ENCODE measurements at regions of chr15 and their contacts with region 1.

Region 1: DNA sequence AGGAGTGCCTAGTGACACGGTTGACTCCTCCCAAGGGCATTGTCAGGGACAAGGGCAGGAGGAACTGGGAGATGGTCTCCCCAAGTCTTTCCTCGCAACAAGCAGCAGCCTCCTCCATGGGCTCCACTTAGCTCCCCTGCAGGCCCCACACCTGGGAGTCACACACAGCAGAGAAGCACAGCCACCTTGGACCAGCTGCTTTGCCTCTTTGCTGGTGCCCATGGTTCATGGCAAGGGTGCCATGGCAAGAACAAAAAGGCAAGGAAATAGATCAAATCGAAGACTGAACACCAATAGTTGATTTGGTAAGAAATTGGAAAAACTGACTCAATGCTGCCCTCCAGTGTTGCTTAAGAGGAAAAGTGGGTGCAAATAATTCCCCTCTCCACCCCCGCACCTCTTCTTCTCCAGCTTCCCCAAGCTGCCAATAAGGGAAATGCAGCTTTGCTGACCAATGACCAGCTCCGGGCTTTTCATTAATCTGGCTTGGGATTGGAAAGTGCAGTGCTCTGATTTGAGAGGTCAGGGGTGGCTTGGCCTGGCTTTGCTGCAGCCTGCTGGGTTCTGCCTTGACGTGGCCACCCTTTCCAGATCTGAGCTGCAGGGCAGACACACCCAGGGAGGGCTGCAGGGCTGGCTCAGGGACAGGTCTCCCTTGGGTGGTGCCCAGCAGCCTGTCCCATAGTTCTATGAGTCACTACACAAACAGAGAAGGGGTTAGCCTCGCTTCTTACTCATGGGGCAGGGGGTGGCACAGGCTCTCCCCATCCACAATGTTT is 162.0 kb downstream of the KLF13 start:
- DNase-seq: peak; percentile 46 to 68
- ATAC-seq: peak; percentile 70 to 89 (median 80)
- H3K4me3 ChIP-seq: no peak overlapping the region
- H3K27ac ChIP-seq: peak overlapping the region in 4 of 10 donors; percentile 0 to 23 (median 14)
- H3K4me1 ChIP-seq: peaks cover 0 to 26% (median 18%) of the 10 kb centered on the region in 9 donors
- H3K27me3 ChIP-seq: peaks cover 0 to 13% (median 5%) of the 10 kb centered on the region in 7 donors
- CTCF ChIP-seq: peak; percentile 79 to 98 (median 87)

Region 2: DNA sequence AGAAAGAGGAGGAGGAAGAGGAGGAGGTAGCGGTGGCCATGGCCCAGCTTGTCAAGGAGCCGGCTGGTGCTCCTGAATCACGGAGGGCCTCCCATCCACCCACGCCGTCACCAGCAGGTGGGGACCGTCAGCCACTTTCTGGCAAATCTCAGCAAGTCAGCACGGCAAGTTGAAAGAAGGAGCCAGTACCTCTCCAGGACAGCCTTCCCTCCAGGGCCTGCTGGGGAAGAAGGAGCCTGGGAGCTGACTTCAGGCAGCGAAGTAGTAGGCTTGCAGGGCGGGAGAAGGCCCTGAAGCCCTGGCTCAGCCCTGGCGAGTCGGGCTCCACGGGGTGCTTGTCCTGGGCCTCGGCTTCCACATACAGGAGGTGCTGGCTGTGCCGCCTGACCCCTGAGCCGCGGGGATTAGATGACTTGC is 287.9 kb before region 1 on chr15:
- intact Hi-C with region 1: loop called in 9 of 10 experiments (anchors 1 to 5 kb)
- DNase-seq: peak; percentile 75 to 83
- ATAC-seq: peak; percentile 89 to 97 (median 92)
- H3K4me3 ChIP-seq: no peak overlapping the region
- H3K27ac ChIP-seq: no peak overlapping the region
- H3K4me1 ChIP-seq: peaks cover 0 to 8% (median 0%) of the 10 kb centered on the region in 9 donors
- H3K27me3 ChIP-seq: no peaks in the 10 kb centered on the region
- CTCF ChIP-seq: peak; percentile 27 to 93 (median 69)

Region 3: DNA sequence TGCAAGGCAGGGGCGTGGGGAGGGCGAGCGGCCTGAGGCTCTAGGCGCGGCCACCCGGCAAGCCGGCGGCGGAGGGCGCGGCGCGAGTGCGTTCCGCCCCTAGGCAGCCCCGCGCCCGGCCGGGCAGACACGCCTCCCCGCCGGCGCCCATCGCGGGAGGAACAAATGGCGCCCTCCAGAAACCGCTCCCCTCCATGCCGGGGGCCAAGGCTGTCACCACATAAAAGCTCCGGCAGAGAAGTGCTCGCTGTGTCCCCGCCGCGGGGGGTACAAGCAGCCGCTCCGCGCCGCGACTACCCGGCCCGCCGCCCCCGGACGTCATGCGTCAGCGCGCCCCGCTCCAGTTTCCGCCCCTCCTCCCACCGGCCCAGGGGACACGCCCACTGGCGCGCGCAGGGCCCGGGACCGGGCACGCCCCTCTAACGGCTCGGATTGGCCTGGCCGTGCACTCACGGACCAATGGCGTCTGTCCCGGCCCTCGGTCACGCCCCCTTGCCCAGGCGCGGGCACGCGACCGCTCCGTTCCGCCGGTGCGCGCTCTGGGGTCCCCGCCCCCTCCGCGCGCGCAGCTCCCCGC is 162.4 kb before region 1 on chr15:
- intact Hi-C with region 1: loop called in 5 of 10 experiments (anchors 2 to 10 kb)
- DNase-seq: peak; percentile 99 to 100
- ATAC-seq: peak; percentile 88 to 95 (median 92)
- H3K4me3 ChIP-seq: peak overlapping the region; percentile 71 to 96 (median 92)
- H3K27ac ChIP-seq: peak overlapping the region; percentile 99 to 100 (median 100)
- H3K4me1 ChIP-seq: peaks cover 14 to 53% (median 38%) of the 10 kb centered on the region in 9 donors
- H3K27me3 ChIP-seq: no peaks in the 10 kb centered on the region
- CTCF ChIP-seq: no peak

Region 4: DNA sequence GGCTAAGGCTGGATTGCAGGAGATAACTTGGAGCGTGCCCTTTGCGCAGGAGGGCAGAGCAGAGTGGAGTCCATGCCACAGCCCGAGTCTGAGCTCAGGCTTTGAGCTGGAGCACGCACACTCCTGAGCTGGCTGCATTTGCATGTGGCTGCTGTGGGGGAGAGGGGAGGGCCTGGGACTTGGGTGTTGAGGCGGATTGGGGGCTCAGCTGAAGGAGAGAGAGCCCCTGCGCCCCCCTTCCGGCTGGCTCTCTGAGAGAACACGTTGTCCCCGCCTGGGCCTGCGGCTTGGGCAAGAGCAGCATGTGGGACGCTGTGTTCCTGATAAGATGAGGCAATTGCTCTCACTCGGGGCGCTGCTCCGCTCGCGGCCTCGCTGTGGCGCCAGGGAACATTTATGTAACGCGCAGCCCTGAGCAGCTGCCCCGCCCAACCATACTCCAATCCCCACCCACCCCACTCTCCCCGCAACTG is 122.9 kb before region 1 on chr15:
- intact Hi-C with region 1: loop called in 1 of 10 experiments (anchors 5 kb)
- DNase-seq: peak; percentile 91 to 93
- ATAC-seq: peak; percentile 89 to 93 (median 92)
- H3K4me3 ChIP-seq: peak overlapping the region in 9 of 10 donors; percentile 21 to 39 (median 32)
- H3K27ac ChIP-seq: peak overlapping the region; percentile 78 to 97 (median 93)
- H3K4me1 ChIP-seq: peaks cover 57 to 100% (median 98%) of the 10 kb centered on the region in 9 donors
- H3K27me3 ChIP-seq: no peaks in the 10 kb centered on the region
- CTCF ChIP-seq: peak in 8 of 9 donors; percentile 30 to 62 (median 50)

Region 5: GRCh38 chr15:31442203-31443111 is 46.2 kb before region 1 on chr15:
- intact Hi-C with region 1: loop called in 7 of 10 experiments (anchors 2 to 10 kb)
- DNase-seq: peak in 1 of 2 donors; percentile 35
- ATAC-seq: peak in 5 of 8 donors; percentile 50 to 65 (median 55)
- H3K4me3 ChIP-seq: no peak overlapping the region
- H3K27ac ChIP-seq: peak overlapping the region in 5 of 10 donors; percentile 34 to 95 (median 86)
- H3K4me1 ChIP-seq: peaks cover 0 to 50% (median 13%) of the 10 kb centered on the region in 9 donors
- H3K27me3 ChIP-seq: no peaks in the 10 kb centered on the region
- CTCF ChIP-seq: peak in 4 of 9 donors; percentile 10 to 28 (median 20)

Region 6: DNA sequence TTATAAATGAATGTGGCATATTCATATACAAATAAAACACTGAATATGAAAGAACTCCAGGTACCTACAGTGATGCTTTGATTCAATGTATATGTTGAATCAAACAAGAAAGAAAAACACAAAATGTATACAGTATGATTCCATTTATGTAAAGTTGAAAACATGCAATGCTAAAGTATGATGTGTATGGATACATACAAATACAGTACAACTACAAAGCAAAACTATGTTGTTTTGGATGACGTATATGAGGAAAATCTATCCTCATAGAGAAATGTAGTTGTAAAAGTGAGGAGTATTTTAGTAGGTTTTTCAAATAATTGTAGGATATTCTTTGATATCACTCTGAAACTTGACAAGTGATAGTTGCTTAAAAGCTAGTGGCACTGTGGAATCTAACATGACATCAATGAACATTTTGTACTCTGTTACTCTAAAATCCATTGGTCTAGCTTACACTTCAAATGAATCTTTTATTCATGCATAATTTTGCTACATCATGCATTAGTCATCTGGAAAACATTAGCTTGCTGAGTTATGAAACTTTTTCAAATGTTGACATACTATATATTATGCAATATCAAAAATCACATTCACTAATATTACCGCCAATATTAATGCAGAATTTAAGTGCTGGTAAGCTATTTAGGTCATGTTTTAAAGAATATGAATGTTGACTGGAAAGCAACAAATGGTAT is 263.6 kb after region 1 on chr15:
- intact Hi-C with region 1: no loop called
- DNase-seq: no peak
- ATAC-seq: no peak
- H3K4me3 ChIP-seq: no peak overlapping the region
- H3K27ac ChIP-seq: no peak overlapping the region
- H3K4me1 ChIP-seq: peaks cover 0 to 5% (median 0%) of the 10 kb centered on the region in 9 donors
- H3K27me3 ChIP-seq: no peaks in the 10 kb centered on the region
- CTCF ChIP-seq: no peak

Measured in heart right ventricle (tissue), 16 donors.